ENCODE measurements at regions of chr7 and their contacts with region 1.

Region 1: DNA sequence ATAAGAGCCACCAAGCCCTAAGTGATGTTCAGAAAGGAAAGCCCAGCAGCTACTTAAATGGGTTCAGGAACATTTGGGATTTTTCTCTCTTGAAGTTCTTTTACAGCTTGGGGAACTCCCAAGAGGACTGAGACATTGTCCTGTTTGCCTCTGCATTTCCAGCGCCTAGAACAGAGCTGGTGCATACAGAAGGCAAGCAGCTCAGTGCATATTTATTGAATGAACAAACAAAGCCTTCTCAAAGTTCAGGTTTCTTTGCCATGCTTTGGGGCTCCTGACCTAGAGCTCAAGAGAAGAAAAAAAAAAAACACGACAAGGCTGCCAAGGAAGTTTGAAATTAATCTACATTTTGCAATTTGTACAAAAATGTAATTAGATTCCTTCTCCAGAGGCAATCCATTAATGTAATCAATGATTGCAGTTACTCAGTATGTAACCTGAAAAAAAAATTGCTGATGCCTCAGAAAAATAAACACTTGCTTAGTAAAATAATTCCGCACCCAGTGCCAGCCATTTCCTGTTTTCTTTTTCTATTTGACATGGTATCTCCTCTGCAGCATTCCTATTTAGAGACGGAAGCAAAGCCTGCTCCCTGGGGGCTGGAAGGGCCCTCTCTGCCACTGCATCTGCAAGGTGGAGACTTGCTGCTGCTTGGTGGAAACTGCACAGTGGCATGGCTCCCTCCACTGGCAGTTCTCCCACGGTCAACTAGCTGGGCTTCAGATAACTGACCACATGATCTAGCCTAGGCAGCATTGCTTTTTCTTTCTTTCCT is 157.3 kb downstream of the TMEM178B start:
- DNase-seq: peak in 1 of 2 experiments; percentile 34
- H3K4me3 ChIP-seq: no peak overlapping the region
- H3K27ac ChIP-seq: no peak overlapping the region
- H3K4me1 ChIP-seq: peaks cover 0 to 2% (median 0%) of the 10 kb centered on the region in 4 experiments; a peak in 1 of 7 replicates
- H3K27me3 ChIP-seq: no peaks in the 10 kb centered on the region; a peak in 1 of 7 replicates
- CTCF ChIP-seq: peak; percentile 60 to 68 (median 65)
- EP300 ChIP-seq: no peak
- POLR2A ChIP-seq: no peak
- RAD21 ChIP-seq: peak; percentile 80 to 84

Region 2: GRCh38 chr7:141072548-141073172 is 158.5 kb before region 1 on chr7:
- CTCF ChIA-PET with region 1: interaction called, 11 read pairs
- POLR2A ChIA-PET with region 1: interaction called, 6 read pairs
- DNase-seq: peak in 1 of 2 experiments; percentile 71
- H3K4me3 ChIP-seq: peak overlapping the region; percentile 62 to 86 (median 67)
- H3K27ac ChIP-seq: no peak overlapping the region
- H3K4me1 ChIP-seq: peaks cover 2 to 7% (median 4%) of the 10 kb centered on the region in 4 experiments; a peak in 5 of 7 replicates
- H3K27me3 ChIP-seq: peaks cover 0 to 19% (median 10%) of the 10 kb centered on the region in 4 experiments; a peak in 5 of 7 replicates
- CTCF ChIP-seq: no peak
- EP300 ChIP-seq: no peak
- POLR2A ChIP-seq: no peak
- RAD21 ChIP-seq: no peak

Measured in H1 (cell line).